ENCODE measurements at regions of chr4 and their contacts with region 1.

Region 1: GRCh38 chr4:152735396-152735859 is 44.1 kb downstream of the TIGD4 start:
- DNase-seq: peak in 6 of 9 donors; percentile 2 to 33 (median 26)
- ATAC-seq: peak; percentile 49
- H3K4me3 ChIP-seq: no peak overlapping the region
- H3K4me3 Mint-ChIP-seq: no peak overlapping the region
- H3K27ac ChIP-seq: no peak overlapping the region
- H3K27ac Mint-ChIP-seq: no peak overlapping the region
- H3K4me1 ChIP-seq: no peaks in the 10 kb centered on the region
- H3K4me1 Mint-ChIP-seq: peaks cover 0 to 7% (median 0%) of the 10 kb centered on the region in 7 donors
- H3K27me3 ChIP-seq: no peaks in the 10 kb centered on the region
- H3K27me3 Mint-ChIP-seq: peaks cover 0 to 6% (median 4%) of the 10 kb centered on the region in 5 donors

Region 2: DNA sequence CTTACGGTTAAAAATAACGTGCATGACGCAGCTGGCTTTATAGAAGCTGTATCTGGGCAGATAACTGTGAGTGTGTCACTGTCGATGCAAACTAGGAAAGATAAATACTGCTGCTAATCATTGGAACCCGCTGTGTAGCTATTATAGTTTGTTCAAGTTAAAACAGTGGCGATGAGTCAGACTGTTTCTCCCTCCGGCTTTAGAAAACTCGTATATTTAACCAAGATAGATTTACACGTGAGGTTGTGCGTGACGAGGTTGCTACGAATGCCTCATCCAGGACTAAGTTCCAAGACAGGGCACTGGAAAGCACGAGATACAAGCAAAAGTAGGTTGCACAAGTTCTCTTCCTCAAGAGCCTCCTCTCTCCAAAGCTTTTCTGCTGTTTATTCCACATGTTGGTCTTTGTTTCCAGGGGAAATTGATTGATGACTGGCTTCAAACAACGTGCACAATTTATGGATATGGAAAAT is 470.2 kb before region 1 on chr4:
- CTCF ChIA-PET with region 1: no interaction called
- POLR2A ChIA-PET with region 1: no interaction called
- intact Hi-C with region 1: no loop called
- DNase-seq: no peak
- ATAC-seq: no peak
- H3K4me3 ChIP-seq: no peak overlapping the region
- H3K4me3 Mint-ChIP-seq: no peak overlapping the region
- H3K27ac ChIP-seq: no peak overlapping the region
- H3K27ac Mint-ChIP-seq: peak overlapping the region in 1 of 9 donors; percentile 51
- H3K4me1 ChIP-seq: no peaks in the 10 kb centered on the region
- H3K4me1 Mint-ChIP-seq: peaks cover 4 to 18% (median 9%) of the 10 kb centered on the region in 7 donors
- H3K27me3 ChIP-seq: no peaks in the 10 kb centered on the region
- H3K27me3 Mint-ChIP-seq: peaks cover 0 to 15% (median 0%) of the 10 kb centered on the region in 5 donors

Region 3: DNA sequence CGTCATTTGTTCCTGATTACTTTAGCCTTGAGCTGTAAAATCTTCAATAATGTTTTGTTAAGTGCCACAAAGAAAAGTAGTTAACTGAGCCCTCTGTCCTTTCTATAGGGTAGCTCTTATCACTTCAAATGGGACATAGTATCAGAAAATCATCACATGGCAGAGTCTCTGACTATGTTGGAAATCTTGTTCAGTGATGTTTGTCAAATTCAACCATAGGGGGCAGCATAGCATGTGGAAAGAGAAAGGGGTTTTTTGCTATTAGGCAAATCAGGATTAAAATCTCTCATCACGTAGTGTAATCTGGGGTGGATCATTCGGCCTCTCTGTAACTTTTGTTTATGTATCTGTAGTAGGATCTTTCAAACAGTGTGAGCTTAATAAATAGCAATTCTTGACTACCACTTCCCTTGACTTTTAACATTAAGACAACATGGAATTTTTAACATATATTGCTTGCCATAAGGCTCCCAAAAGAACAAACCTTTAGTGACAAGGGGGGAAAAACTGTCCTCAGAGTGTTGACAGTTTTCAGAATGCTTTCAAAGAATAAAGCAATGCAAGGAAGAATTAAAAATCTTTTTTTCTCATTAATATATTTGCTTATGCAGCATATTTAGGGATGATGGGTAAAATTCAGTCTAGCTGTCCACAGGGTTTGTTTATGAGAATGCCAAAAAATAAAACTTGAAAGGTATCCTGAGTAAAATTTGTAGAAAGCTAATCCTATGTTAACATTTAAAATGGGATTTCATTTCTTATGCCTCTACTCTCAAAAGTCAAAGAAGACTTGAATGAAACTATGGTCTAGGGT is 326.7 kb before region 1 on chr4:
- CTCF ChIA-PET with region 1: no interaction called
- POLR2A ChIA-PET with region 1: no interaction called
- intact Hi-C with region 1: loop called (anchors 1 kb)
- DNase-seq: peak in 6 of 9 donors; percentile 7 to 29 (median 21)
- ATAC-seq: peak; percentile 77
- H3K4me3 ChIP-seq: no peak overlapping the region
- H3K4me3 Mint-ChIP-seq: no peak overlapping the region
- H3K27ac ChIP-seq: no peak overlapping the region
- H3K27ac Mint-ChIP-seq: no peak overlapping the region
- H3K4me1 ChIP-seq: no peaks in the 10 kb centered on the region
- H3K4me1 Mint-ChIP-seq: peaks cover 2 to 20% (median 11%) of the 10 kb centered on the region in 7 donors
- H3K27me3 ChIP-seq: no peaks in the 10 kb centered on the region
- H3K27me3 Mint-ChIP-seq: no peaks in the 10 kb centered on the region

Region 4: DNA sequence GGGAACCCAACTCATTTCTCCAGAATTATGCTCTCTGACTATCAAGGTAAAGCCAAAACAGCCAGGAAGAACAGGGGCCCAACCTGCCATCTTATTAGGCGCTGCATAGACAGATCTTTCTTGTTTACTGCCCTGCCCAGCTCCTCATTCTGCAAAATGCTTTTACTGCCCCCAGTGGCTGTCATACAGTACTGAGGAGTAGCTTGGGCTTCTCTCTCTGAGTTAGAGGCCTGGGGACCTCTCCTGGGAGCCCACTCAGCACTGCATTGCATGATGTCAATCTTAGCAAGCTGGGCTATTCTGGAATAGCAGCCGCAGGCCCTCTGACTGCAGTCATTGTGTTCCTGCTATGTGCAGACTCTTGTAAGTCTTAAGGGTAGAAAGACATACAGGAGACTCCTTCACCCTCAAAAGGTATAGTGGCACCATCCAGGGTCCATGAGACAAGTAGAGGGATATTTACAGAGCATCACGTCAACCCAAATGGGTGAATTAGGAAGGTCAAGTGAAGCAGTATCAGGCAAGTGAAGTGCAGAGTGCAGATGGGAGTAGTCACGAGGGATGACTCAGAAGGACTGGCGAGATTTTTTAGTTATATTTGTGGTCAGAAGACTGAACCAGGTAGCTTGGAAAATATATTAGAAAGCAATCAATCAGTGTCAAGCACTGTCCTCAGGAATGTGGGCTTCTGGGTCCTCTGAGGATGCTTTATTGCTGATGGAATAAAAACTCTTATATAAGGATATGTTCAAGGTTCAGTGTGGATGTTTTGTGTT is 1347.5 kb after region 1 on chr4:
- CTCF ChIA-PET with region 1: no interaction called
- POLR2A ChIA-PET with region 1: no interaction called
- intact Hi-C with region 1: no loop called
- DNase-seq: no peak
- ATAC-seq: no peak
- H3K4me3 ChIP-seq: no peak overlapping the region
- H3K4me3 Mint-ChIP-seq: no peak overlapping the region
- H3K27ac ChIP-seq: no peak overlapping the region
- H3K27ac Mint-ChIP-seq: no peak overlapping the region
- H3K4me1 ChIP-seq: no peaks in the 10 kb centered on the region
- H3K4me1 Mint-ChIP-seq: no peaks in the 10 kb centered on the region
- H3K27me3 ChIP-seq: no peaks in the 10 kb centered on the region
- H3K27me3 Mint-ChIP-seq: peaks cover 0 to 16% (median 2%) of the 10 kb centered on the region in 5 donors

Measured in naive thymus-derived CD4-positive, alpha-beta T cell (primary cell).